Left ventricle myocardium superior (tissue), 1 donor: ENCODE measurements at regions of chr4 and their contacts with region 1.

Region 1: GRCh38 chr4:48002267-48002666 is 14.2 kb downstream of the CNGA1 start:
- DNase-seq: no peak
- ATAC-seq: no peak

Region 2: DNA sequence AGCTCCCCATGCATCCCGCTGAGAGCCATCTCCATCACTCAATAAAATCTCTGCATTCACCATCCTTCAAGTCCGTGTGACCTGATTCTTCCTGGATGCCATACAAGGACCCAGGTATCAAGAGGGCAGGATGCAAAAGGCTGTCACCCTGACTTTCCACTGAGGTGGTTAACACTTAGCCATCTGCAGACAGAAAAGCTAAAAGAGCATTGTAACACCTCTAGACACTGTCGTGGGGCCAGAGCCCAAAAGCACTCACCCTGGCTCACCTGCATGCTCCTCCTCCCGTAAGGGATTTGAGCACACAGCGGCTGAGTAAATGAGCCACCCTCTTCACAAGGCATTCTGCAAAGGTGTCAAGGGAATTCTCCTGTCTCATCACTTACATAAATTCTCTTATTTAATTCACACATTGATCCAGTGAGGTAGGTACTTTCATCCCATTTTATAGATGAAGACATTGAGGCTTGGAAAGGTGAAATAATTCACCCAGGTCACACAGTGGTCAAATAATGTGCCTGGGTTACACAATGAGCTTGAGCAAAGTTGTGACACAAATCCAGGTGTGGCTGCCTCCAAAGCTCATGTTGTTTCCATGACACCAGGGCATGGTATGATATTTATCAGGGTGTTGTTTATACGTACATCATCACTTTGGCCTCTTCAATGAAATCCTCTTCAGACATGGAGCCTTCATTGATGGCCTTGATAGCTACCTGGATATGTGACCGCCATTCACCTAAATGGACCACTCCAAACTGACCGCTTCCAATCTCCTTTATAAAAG is 83.7 kb after region 1 on chr4:
- intact Hi-C with region 1: loop called (anchors 5 kb)
- DNase-seq: no peak
- ATAC-seq: no peak

Region 3: DNA sequence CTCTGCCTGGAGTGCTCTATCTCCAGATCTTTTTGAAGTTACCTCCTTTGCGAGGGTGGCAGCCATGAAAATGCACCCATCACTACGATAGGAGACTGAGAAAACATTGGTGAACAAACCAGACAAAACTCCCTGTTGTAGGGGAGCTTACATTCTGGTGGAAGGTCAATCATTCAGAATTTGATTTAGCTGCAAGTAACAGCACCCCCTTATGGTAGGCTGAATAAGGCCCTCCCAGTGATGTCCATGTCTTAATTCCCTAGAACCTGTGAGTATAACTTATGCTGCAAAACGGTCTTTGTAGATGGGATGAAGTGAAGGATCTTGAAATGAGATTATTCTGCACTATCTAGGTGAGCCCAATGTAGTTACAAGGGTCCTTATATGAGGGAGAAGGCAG is 273.0 kb after region 1 on chr4:
- intact Hi-C with region 1: no loop called
- DNase-seq: no peak
- ATAC-seq: peak; percentile 53